ENCODE measurements at regions of chr1 and their contacts with region 1.

Region 1: GRCh38 chr1:22983934-22984333 is 11.3 kb upstream of the LACTBL1 start:
- DNase-seq: no peak
- H3K4me3 ChIP-seq: no peak overlapping the region
- H3K27ac ChIP-seq: no peak overlapping the region
- H3K4me1 ChIP-seq: no peaks in the 10 kb centered on the region
- H3K27me3 ChIP-seq: no peaks in the 10 kb centered on the region
- CTCF ChIP-seq: no peak

Region 2: DNA sequence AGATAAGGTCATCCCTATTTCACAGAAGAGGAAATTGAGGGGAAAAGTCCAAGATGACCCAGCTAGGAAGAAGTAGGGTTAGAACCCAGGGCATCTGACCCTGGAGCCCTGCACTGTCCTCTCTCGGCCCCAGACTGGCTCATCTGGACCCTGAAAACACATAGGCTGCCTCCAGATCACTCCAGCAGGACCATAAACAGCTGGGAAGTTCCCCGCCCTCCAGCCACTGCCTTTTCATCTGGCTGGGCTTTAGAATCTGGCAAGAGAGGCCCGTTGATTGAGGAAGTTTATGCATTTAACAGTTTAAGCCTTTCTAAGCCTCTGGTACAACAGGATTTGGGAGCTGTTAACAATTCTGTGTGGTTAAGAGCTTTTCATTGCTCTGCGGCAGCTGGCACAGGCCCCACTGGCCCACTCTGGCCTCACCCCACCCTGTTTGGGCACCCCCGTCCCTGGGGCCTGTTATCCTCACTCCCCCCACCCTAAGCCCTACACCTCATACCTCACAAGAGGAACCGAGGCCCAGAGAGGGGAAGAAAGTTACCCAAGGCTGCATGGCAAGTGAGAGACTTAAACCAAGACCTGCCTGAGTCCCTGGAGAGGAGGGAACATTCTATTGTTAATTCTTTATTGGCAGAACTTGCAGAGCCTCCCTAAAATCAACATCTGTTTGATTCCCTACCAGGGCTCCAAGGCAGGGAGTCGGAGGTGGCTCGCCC is 189.1 kb before region 1 on chr1:
- CTCF ChIA-PET with region 1: no interaction called
- dilution Hi-C with region 1: no loop called
- in situ Hi-C with region 1: no loop called
- intact Hi-C with region 1: no loop called
- DNase-seq: no peak
- H3K4me3 ChIP-seq: no peak overlapping the region
- H3K27ac ChIP-seq: no peak overlapping the region
- H3K4me1 ChIP-seq: peaks cover 10% of the 10 kb centered on the region
- H3K27me3 ChIP-seq: no peaks in the 10 kb centered on the region
- CTCF ChIP-seq: no peak

Region 3: GRCh38 chr1:22930235-22930912 is 53.6 kb before region 1 on chr1:
- CTCF ChIA-PET with region 1: no interaction called
- dilution Hi-C with region 1: no loop called
- in situ Hi-C with region 1: no loop called
- intact Hi-C with region 1: no loop called
- DNase-seq: peak; percentile 16
- H3K4me3 ChIP-seq: no peak overlapping the region
- H3K27ac ChIP-seq: no peak overlapping the region
- H3K4me1 ChIP-seq: no peaks in the 10 kb centered on the region
- H3K27me3 ChIP-seq: no peaks in the 10 kb centered on the region
- CTCF ChIP-seq: peak; percentile 67 to 82

Region 4: GRCh38 chr1:22944346-22945055 is 39.4 kb before region 1 on chr1:
- CTCF ChIA-PET with region 1: no interaction called
- dilution Hi-C with region 1: no loop called
- in situ Hi-C with region 1: no loop called
- intact Hi-C with region 1: no loop called
- DNase-seq: no peak
- H3K4me3 ChIP-seq: no peak overlapping the region
- H3K27ac ChIP-seq: no peak overlapping the region
- H3K4me1 ChIP-seq: no peaks in the 10 kb centered on the region
- H3K27me3 ChIP-seq: no peaks in the 10 kb centered on the region
- CTCF ChIP-seq: no peak

Region 5: DNA sequence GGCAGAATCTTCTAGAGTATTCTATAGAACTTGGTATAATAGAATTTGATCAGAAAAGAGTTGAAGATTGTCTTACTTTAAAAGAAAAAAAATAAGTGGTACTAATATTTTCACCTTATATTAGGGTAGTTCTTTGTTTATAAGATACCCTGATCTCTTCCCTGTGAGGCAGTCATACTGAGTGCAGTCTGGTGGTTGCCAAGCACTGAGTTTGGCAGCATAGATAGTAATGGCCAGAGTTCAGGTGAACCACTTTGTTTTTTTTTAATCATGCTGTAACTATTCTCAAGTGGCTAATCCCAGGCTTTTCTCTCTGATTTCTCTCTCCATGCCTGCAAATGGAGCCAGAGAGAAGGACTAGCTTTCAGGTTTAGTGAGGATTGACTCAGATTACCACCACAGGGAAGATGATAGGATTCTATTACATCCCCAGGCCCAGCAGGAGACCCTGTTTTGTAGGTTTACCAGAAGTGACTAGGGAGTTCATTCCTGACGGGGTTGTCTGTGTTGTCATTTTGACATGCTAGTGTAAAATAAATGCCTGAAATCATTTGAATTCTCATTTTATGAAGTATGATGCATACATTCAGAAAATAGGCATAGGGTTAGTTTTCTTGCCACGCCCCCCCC is 52.0 kb after region 1 on chr1:
- CTCF ChIA-PET with region 1: no interaction called
- dilution Hi-C with region 1: loop called (anchors 5 kb)
- in situ Hi-C with region 1: no loop called
- intact Hi-C with region 1: no loop called
- DNase-seq: no peak
- H3K4me3 ChIP-seq: no peak overlapping the region
- H3K27ac ChIP-seq: no peak overlapping the region
- H3K4me1 ChIP-seq: no peaks in the 10 kb centered on the region
- H3K27me3 ChIP-seq: no peaks in the 10 kb centered on the region
- CTCF ChIP-seq: no peak

Region 6: DNA sequence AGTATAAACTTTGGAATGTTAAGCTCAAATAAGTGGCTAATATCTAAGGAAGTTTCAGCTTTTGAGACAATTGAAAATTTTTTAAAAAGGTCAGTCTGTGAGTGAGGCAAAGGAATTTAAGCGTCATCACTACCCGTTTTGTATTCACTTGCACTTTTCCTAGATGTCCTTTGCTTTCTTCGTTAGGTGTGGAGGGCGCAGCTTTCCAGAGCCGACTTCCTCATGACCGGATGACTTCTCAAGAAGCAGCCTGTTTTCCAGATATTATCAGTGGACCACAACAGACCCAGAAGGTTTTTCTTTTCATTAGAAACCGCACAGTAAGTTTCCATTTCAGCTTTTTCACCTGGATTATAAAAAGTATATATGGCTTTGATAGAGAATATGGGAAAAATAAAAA is 66.3 kb after region 1 on chr1:
- CTCF ChIA-PET with region 1: no interaction called
- dilution Hi-C with region 1: no loop called
- in situ Hi-C with region 1: no loop called
- intact Hi-C with region 1: loop called (anchors 2 kb)
- DNase-seq: peak; percentile 21
- H3K4me3 ChIP-seq: no peak overlapping the region
- H3K27ac ChIP-seq: no peak overlapping the region
- H3K4me1 ChIP-seq: peaks cover 13% of the 10 kb centered on the region
- H3K27me3 ChIP-seq: no peaks in the 10 kb centered on the region
- CTCF ChIP-seq: no peak

Measured in mammary epithelial cell (primary cell).